Activated T-helper 1 cell treated with anti-CD3 and anti-CD28 coated beads, Interleukin-12 subunit alpha, Interleukin-12 subunit beta, Interleukin-2, Interleukin-4 antibody, amounts not matched to agents 30 ng/mL and 10 ng/mL and 1 ng/mL, durations not matched to agents 14 hours and 24 hours and 36 hours (primary cell): ENCODE measurements at regions of chr9 and their contacts with region 1.

Region 1: DNA sequence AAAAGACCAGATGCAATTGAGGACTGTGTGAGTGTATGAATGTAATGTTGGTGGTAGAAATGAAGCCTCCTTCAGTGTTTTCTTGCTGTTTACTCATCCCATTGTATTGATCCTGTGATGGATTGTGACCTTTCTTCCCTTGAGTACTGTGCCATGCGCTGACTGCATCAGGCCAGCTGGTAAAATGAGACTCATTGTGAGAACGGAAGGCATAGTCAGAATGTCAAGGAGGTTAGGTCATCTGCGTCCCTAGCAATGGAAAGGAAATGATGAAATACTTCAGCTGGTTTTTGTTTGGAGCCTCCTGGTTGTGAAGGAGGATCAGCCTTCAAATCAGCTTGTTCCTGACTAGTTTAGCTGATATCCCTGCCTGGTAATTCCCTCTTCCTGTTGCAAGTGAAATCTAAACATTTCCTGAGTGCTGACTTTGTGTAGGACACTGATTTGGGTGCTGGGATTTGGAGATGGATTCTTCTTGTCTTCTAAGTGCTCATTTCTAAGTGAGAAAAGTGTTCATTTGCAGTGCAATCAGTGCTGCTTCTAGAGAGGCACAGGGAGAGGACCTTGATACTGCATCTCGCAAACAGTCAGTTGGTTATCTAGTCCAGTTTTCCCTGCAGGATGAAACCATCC is 35.5 kb downstream of the TNFSF8 start:
- DNase-seq: peak; percentile 54
- H3K4me3 Mint-ChIP-seq: peak overlapping the region; percentile 16
- H3K27ac Mint-ChIP-seq: peak overlapping the region; percentile 90
- H3K4me1 Mint-ChIP-seq: peaks cover 57% of the 10 kb centered on the region
- H3K27me3 Mint-ChIP-seq: no peaks in the 10 kb centered on the region

Region 2: GRCh38 chr9:113614843-113615648 is 1279.9 kb before region 1 on chr9:
- intact Hi-C with region 1: no loop called
- DNase-seq: no peak
- H3K4me3 Mint-ChIP-seq: peak overlapping the region; percentile 64
- H3K27ac Mint-ChIP-seq: peak overlapping the region; percentile 76
- H3K4me1 Mint-ChIP-seq: peaks cover 42% of the 10 kb centered on the region
- H3K27me3 Mint-ChIP-seq: peaks cover 2% of the 10 kb centered on the region

Region 3: DNA sequence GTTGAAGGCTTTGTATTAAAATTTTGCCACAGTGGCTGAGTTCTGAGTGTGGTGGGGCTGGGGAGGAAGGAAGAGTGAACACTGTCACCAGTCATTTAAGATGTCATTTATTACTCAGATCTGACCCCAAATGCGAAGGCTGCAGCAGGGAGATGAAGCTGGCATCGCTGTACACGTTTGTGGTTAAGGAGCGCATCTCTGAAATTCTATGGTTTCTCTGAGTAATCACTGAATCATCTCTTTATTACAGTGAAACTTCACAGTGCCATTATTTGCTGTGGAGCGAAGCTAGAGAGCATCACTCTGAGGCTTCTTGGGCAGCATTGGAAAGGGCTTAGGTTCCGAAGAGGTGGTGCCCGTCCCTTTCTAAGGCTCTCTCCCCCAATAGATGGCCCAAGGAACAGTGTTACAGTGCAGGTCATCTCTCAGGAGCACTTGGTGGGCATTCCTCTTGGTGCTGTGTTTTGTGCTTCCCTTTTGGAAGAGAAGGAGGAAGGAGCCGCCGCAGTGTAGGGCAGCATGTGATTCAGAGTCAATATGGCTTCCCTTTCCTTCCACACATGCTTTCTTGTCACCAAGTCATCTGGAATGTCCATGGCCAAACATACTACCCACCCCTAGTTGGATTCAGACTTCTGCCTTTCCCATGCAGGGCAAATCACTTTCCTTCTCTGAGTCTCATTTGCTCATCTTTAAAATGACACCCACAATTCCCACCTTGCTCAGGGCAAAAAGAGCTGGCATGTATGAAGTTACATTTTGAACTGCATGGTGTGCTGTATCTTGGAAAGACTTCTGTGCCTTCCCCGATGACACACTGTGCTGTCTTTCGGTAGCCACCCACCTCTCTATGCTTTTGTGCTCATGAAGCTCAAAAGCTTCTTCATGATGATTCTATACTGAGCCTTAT is 203.6 kb before region 1 on chr9:
- intact Hi-C with region 1: loop called (anchors 1 kb)
- DNase-seq: peak; percentile 80
- H3K4me3 Mint-ChIP-seq: peak overlapping the region; percentile 69
- H3K27ac Mint-ChIP-seq: peak overlapping the region; percentile 98
- H3K4me1 Mint-ChIP-seq: peaks cover 93% of the 10 kb centered on the region
- H3K27me3 Mint-ChIP-seq: no peaks in the 10 kb centered on the region

Region 4: DNA sequence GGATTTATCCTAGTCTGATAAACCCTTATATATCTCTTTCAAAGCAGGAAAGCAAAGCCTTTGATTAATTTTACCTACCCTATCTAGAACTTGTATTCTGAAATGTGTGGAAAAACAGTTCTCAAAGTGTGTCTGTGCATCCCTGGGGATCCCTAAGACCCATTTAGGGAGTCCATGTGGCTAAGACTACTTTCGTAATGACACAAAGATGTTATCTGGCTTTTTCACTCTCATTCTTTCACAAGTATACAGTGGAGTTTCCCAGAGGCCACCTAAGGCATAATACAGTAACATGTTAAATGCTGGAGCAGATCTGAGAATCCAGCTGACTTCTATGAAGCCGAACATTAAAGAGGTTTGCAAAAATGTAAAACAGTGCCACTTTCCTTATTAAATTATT is 34.7 kb before region 1 on chr9:
- intact Hi-C with region 1: loop called (anchors 1 kb)
- DNase-seq: no peak
- H3K4me3 Mint-ChIP-seq: no peak overlapping the region
- H3K27ac Mint-ChIP-seq: no peak overlapping the region
- H3K4me1 Mint-ChIP-seq: peaks cover 22% of the 10 kb centered on the region
- H3K27me3 Mint-ChIP-seq: peaks cover 9% of the 10 kb centered on the region

Region 5: GRCh38 chr9:114883709-114884108 is 11.2 kb before region 1 on chr9:
- intact Hi-C with region 1: no loop called
- DNase-seq: no peak
- H3K4me3 Mint-ChIP-seq: no peak overlapping the region
- H3K27ac Mint-ChIP-seq: no peak overlapping the region
- H3K4me1 Mint-ChIP-seq: peaks cover 10% of the 10 kb centered on the region
- H3K27me3 Mint-ChIP-seq: no peaks in the 10 kb centered on the region

Region 6: DNA sequence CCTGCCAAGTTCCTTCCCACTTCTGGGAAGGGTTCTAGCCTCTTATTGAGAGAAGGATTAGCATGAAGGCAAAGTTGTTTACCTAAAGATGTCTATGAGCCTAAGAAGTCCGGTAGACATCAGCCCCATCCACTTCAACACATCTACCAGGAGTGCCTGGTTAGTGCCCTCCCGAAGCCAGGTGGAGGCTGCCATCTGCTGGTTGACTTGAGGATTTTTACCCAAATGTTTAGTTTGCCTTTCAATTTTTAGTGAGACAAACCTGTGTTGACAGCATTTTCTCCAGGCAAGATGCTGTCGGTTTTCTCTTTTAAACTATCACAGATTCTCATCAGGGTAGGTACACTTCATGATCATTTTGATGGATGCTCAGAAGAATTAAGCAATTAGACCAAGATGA is 119.1 kb after region 1 on chr9:
- intact Hi-C with region 1: no loop called
- DNase-seq: peak; percentile 73
- H3K4me3 Mint-ChIP-seq: no peak overlapping the region
- H3K27ac Mint-ChIP-seq: peak overlapping the region; percentile 52
- H3K4me1 Mint-ChIP-seq: peaks cover 72% of the 10 kb centered on the region
- H3K27me3 Mint-ChIP-seq: peaks cover 3% of the 10 kb centered on the region

Region 7: DNA sequence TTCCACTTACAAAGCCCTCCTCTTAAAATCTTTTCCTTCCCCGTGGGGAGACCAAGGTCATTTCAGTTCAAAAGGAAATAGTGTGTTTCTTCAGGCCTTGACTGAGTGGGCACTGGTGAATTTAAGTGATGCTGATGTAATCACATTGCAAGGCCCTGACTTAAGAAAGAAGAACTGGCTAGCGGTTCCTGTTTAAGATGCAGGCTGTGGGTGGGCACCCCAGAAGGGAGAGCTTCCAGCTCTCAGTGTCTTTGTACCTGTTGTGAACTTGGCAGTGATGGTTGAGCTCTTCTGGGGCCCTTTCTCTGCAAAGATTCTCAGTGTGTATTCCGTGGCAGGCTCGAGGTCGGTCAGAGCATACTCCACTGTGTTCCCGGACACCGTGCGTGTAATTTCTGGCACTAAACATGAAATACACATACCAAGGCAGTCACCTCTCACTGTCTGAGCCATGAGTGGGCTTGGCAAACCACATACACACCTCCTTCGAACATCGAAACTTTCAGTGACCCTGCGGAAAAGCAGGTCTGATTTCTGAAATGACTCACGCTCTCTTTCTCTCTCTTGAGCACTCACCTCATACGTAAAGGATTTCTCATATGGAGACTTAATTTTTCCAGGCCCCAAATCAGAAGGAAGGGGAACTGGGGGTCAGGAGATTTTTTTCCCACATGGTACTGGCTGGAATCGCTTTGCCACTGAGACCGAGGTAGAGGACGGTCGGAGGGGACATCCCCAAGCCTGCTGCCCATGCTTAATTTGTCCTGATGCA is 141.1 kb after region 1 on chr9:
- intact Hi-C with region 1: loop called (anchors 1 kb)
- DNase-seq: no peak
- H3K4me3 Mint-ChIP-seq: peak overlapping the region; percentile 31
- H3K27ac Mint-ChIP-seq: peak overlapping the region; percentile 84
- H3K4me1 Mint-ChIP-seq: peaks cover 40% of the 10 kb centered on the region
- H3K27me3 Mint-ChIP-seq: peaks cover 5% of the 10 kb centered on the region